HAP-1 (cell line): ENCODE measurements at regions of chr6 and their contacts with region 1.

Region 1: GRCh38 chr6:144582939-144583613 is 297.9 kb downstream of the UTRN start:
- DNase-seq: peak; percentile 57 to 61
- H3K4me3 ChIP-seq: peak overlapping the region; percentile 26
- H3K4me1 ChIP-seq: peaks cover 25% of the 10 kb centered on the region
- H3K27me3 ChIP-seq: no peaks in the 10 kb centered on the region

Region 2: GRCh38 chr6:144528743-144529425 is 54.2 kb before region 1 on chr6:
- in situ Hi-C with region 1: no loop called
- DNase-seq: peak; percentile 52 to 84
- H3K4me3 ChIP-seq: no peak overlapping the region
- H3K4me1 ChIP-seq: peaks cover 11% of the 10 kb centered on the region
- H3K27me3 ChIP-seq: no peaks in the 10 kb centered on the region

Region 3: GRCh38 chr6:144931172-144932035 is 348.3 kb after region 1 on chr6:
- in situ Hi-C with region 1: loop called (anchors 25 kb)
- DNase-seq: peak; percentile 49 to 72
- H3K4me3 ChIP-seq: no peak overlapping the region
- H3K4me1 ChIP-seq: peaks cover 2% of the 10 kb centered on the region; the same call in 1 of the 2 replicates
- H3K27me3 ChIP-seq: no peaks in the 10 kb centered on the region

Region 4: DNA sequence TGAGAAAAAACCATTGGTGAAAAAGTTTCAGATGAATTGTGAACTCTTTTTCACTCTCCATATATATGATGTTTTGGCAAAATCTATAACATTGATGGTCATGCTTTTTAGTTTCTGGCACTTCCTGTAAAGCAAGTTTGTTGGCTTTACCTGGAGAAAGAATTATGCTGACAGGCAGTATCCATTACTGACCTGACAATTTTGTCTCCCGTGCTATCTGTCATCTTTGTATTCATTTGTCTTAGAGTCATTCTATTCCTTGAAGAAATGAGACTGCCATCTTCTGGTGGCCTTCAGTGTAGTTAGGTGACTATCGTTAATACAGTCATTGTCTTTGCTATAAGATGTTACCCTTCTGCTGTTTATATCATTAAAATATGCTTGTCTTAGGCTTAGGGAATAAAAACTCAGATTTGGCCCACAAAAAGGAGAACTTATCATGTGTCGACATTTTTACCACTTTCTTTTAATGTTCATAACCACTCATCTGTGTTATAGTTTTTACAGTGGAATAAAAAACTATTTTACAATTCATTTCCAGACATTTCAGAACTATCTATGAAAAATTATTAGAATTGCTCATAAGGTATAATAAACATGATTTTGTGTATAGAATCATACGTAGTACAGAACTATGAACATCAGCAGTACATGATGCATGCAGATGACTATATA is 445.2 kb after region 1 on chr6:
- in situ Hi-C with region 1: loop called (anchors 25 kb)
- DNase-seq: peak; percentile 40 to 66
- H3K4me3 ChIP-seq: no peak overlapping the region
- H3K4me1 ChIP-seq: no peaks in the 10 kb centered on the region
- H3K27me3 ChIP-seq: no peaks in the 10 kb centered on the region

Region 5: DNA sequence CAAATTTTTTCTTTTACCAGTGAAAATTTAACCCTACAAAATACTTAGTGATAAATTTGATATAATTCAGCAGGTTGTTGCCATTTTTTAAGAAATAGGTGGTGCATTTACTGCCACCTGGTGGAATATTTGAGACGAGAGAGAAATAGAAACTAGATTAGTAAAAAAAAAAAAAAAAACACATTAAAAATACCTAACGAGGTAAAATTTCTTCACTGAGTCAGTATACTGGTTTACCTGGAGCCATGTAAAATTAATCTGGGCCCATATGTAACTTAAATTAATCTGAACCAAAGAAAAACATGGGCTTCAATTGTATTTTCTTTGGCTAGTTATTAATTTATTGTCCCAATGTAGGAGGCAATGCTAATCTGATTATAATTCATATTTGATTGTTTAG is 631.5 kb after region 1 on chr6:
- in situ Hi-C with region 1: loop called (anchors 25 kb)
- DNase-seq: peak; percentile 22 to 45
- H3K4me3 ChIP-seq: no peak overlapping the region
- H3K4me1 ChIP-seq: no peaks in the 10 kb centered on the region
- H3K27me3 ChIP-seq: no peaks in the 10 kb centered on the region

Region 6: GRCh38 chr6:145633981-145634627 is 1051.0 kb after region 1 on chr6:
- in situ Hi-C with region 1: loop called (anchors 25 kb)
- DNase-seq: peak; percentile 80 to 94
- H3K4me3 ChIP-seq: no peak overlapping the region
- H3K4me1 ChIP-seq: no peaks in the 10 kb centered on the region
- H3K27me3 ChIP-seq: no peaks in the 10 kb centered on the region